ENCODE measurements at regions of chr9 and their contacts with region 1.

Region 1: GRCh38 chr9:120755827-120756434 is 37.3 kb downstream of the FBXW2 start:
- DNase-seq: peak; percentile 49 to 78
- H3K4me3 ChIP-seq: no peak overlapping the region
- H3K4me1 ChIP-seq: no peaks in the 10 kb centered on the region
- H3K27me3 ChIP-seq: no peaks in the 10 kb centered on the region

Region 2: DNA sequence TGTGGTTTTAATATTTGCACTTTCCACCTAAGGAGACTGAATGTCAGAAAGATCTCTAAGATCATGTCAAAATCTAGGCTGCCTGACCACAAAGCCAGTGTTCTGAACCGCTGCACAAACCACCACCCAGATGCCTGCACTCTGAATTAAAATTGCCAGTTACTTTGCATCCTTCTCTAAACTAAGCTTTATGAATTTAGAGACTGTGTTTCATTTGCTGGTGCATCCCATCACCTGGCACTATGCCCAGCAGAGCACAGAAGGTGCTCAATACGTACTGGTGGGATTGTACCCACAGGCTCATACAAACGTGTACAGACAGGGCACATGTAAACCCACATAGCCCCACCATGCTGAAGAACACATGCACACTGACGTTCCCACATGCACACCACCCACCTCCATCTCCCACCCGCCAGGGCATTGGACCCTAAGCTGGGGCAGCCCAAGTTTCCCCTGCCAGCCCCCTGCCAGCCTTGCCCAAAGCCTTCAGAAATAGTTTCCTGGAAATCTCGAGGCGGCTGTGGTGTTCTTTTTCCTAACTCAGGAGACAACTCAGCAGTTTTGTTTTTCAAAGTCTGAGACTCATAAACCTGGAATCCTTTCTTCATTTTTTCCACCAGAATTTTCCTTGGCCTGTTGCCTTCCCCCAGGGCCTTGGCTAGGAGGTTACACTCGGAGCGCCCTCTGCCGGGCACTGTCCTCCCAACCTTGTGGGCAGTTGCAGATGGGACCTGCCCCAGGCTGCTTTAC is 180.3 kb after region 1 on chr9:
- in situ Hi-C with region 1: loop called (anchors 5 kb)
- DNase-seq: peak; percentile 70 to 96
- H3K4me3 ChIP-seq: no peak overlapping the region
- H3K4me1 ChIP-seq: peaks cover 7% of the 10 kb centered on the region; the same call in 1 of the 2 replicates
- H3K27me3 ChIP-seq: peaks cover 10% of the 10 kb centered on the region

Region 3: DNA sequence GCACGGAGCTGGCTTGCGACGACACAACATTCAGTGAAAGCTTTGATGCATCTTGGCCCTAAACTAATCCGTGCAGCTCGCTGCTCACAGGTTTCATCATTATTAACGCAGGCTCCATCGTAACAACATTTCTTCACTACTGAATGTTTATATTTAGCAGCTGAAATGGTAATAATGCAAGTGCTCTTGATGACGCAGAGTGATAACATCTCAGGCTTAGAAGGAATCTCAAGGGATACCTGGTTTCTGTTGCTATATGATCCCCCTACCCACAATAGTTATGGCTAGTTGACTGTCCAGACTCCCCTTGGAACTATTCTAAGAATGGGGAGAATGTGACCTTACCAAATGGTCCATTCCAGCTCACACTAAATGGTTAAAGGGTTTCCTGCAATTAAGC is 258.0 kb after region 1 on chr9:
- in situ Hi-C with region 1: no loop called
- DNase-seq: no peak
- H3K4me3 ChIP-seq: no peak overlapping the region
- H3K4me1 ChIP-seq: no peaks in the 10 kb centered on the region
- H3K27me3 ChIP-seq: peaks cover 2% of the 10 kb centered on the region; the same call in 1 of the 2 replicates

Region 4: GRCh38 chr9:121059998-121060636 is 304.2 kb after region 1 on chr9:
- in situ Hi-C with region 1: loop called (anchors 10 kb)
- DNase-seq: peak; percentile 62 to 65
- H3K4me3 ChIP-seq: no peak overlapping the region
- H3K4me1 ChIP-seq: peaks cover 7% of the 10 kb centered on the region
- H3K27me3 ChIP-seq: peaks cover 4% of the 10 kb centered on the region; the same call in 1 of the 2 replicates

Region 5: DNA sequence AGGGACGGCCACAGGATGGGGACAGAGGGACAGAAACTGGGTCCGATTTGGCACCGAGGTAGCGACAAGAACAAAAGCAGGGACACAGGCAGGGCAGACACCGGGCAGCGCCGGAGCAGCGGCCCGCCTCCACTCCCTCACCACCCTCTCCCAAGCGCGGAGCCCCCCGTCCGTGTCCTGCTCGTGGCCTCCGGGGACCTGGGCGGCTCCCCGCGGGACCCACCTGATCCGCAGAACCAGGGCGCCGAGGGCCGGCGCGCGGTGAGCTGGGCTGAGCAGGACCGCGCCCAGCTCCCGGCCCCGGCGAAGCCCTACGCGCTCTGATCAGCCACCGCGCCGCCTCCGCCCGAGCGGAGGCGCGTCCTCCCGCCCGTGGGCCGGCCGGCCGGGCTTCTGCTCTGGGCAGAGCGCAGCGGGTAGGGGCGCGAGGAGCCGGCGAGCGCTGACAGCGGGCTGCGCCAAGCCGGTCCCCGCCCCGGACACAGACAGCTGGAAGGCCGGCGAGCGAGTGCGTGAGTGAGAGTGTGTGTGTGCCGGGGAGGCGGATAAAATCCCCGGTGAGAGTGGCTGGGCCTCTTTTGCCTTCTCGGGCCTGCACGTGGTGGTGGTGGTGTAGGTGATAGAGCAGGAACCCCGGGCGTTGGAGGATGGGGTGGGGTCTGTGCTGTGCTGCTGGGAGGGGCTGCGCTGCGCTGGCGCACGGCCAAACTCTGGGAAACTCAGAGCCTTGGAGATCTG is 743.7 kb after region 1 on chr9 and contains the start of gene GGTA1:
- in situ Hi-C with region 1: no loop called
- DNase-seq: peak; percentile 12 to 74
- H3K4me3 ChIP-seq: peak within 1 kb of the TSS; percentile 29
- H3K4me1 ChIP-seq: peaks cover 16% of the 10 kb centered on the region
- H3K27me3 ChIP-seq: peaks cover 22% of the 10 kb centered on the region